Naive thymus-derived CD4-positive, alpha-beta T cell (primary cell): ENCODE measurements at regions of chr4 and their contacts with region 1.

Region 1: GRCh38 chr4:152779513-152780266 is at the starts of genes ARFIP1 and TIGD4:
- DNase-seq: peak; percentile 86 to 97 (median 93)
- ATAC-seq: peak; percentile 94
- H3K4me3 ChIP-seq: peak within 1 kb of the TSS; percentile 97
- H3K4me3 Mint-ChIP-seq: peak within 1 kb of the TSS; percentile 92 to 100 (median 96)
- H3K27ac ChIP-seq: peak within 1 kb of the TSS; percentile 80
- H3K27ac Mint-ChIP-seq: peak within 1 kb of the TSS; percentile 90 to 99 (median 95)
- H3K4me1 ChIP-seq: peaks cover 13 to 16% of the 10 kb centered on the region in 2 donors
- H3K4me1 Mint-ChIP-seq: peaks cover 33 to 60% (median 44%) of the 10 kb centered on the region in 7 donors
- H3K27me3 ChIP-seq: no peaks in the 10 kb centered on the region
- H3K27me3 Mint-ChIP-seq: peaks cover 0 to 29% (median 6%) of the 10 kb centered on the region in 5 donors
- total RNA-seq, gene ARFIP1: 5.1 to 20.2 (median 15.1) TPM
- total RNA-seq, gene TIGD4: 0.15 to 0.19 TPM in 2 of 5 experiments, not detected in the others

Region 2: DNA sequence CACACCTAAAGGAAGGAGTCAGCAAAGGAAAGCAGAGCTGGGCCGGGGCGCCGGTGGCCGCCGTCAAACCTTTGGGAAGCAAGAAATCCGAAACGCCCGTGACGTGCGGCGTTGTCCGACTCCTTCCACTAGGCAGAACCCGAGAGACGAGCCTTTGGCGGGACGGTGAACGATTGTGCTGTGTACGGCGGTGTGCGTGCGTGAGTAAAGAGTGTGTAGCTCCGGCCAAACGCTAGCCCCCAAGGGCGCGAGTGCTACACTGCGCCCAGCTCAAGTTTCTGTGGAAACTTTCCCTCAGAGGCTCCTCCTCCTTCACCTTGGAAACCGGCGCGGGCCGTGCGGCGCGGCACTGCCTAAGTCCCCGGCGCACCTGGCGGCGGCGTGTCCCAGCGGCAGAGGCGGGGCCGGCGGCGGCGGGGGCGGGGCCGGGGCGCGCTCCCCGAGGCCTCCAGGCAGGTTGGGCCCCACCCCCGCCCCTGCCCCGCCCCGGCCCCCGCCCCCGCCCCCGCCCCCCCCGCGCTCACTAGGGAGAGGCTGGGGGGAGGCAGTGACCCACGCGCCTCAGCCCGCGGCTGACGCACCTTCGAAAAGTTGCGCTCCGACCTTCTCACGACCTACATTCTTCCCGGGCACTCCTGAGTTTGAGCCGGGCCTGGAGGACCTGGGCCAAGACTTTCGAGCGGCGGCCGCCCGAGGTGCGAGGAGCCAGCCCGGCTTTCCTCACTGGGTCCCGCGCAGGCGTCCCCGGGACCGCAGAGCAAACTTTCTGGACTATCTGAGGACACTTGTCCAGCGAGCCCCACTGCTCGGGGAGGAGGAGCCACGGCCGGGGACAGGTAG is 1370.8 kb before region 1 on chr4 and contains the start of gene FHIP1A:
- CTCF ChIA-PET with region 1: no interaction called
- POLR2A ChIA-PET with region 1: no interaction called
- intact Hi-C with region 1: loop called in 1 of 2 experiments (anchors 1 kb)
- DNase-seq: peak; percentile 67 to 89 (median 87)
- ATAC-seq: peak; percentile 96
- H3K4me3 ChIP-seq: peak within 1 kb of the TSS; percentile 63
- H3K4me3 Mint-ChIP-seq: peak within 1 kb of the TSS; percentile 86 to 97 (median 94)
- H3K27ac ChIP-seq: peak within 1 kb of the TSS; percentile 53
- H3K27ac Mint-ChIP-seq: peak within 1 kb of the TSS; percentile 21 to 92 (median 85)
- H3K4me1 ChIP-seq: peaks cover 0 to 6% of the 10 kb centered on the region in 2 donors
- H3K4me1 Mint-ChIP-seq: peaks cover 15 to 26% (median 23%) of the 10 kb centered on the region in 7 donors
- H3K27me3 ChIP-seq: no peaks in the 10 kb centered on the region
- H3K27me3 Mint-ChIP-seq: peaks cover 0 to 56% (median 8%) of the 10 kb centered on the region in 5 donors
- total RNA-seq, gene FHIP1A: 0.05 to 2.7 (median 1.9) TPM

Region 3: GRCh38 chr4:152485726-152486276 is 293.9 kb before region 1 on chr4:
- CTCF ChIA-PET with region 1: no interaction called
- POLR2A ChIA-PET with region 1: no interaction called
- intact Hi-C with region 1: loop called in 1 of 2 experiments (anchors 2 kb)
- DNase-seq: peak in 7 of 9 donors; percentile 10 to 49 (median 35)
- ATAC-seq: peak; percentile 97
- H3K4me3 ChIP-seq: no peak overlapping the region
- H3K4me3 Mint-ChIP-seq: peak overlapping the region in 2 of 10 donors; percentile 10 to 74
- H3K27ac ChIP-seq: no peak overlapping the region
- H3K27ac Mint-ChIP-seq: peak overlapping the region in 3 of 9 donors; percentile 30 to 79 (median 40)
- H3K4me1 ChIP-seq: peaks cover 0 to 13% of the 10 kb centered on the region in 2 donors
- H3K4me1 Mint-ChIP-seq: peaks cover 30 to 56% (median 45%) of the 10 kb centered on the region in 7 donors
- H3K27me3 ChIP-seq: no peaks in the 10 kb centered on the region
- H3K27me3 Mint-ChIP-seq: no peaks in the 10 kb centered on the region

Region 4: DNA sequence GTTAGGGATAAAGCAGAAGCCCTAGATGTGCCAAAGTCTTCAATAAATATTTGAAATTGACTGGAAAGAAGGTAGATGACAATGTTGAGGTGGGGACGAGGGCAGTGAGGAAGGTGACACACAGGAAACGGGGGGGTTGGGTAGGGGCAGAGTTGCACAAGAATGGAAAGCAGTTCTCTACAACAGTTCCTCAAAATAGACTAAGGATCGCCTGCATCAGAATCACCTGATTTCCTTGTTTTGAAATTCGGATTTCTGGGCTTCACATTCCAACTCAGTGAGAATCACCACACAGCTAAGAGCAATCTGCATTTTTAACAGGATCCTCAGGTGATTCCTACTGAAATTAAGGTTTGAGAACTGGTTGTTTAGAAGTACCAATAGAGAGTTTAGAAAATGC is 70.7 kb after region 1 on chr4:
- CTCF ChIA-PET with region 1: no interaction called
- POLR2A ChIA-PET with region 1: no interaction called
- intact Hi-C with region 1: loop called in 1 of 2 experiments (anchors 1 kb)
- DNase-seq: peak in 4 of 9 donors; percentile 2 to 20 (median 11)
- ATAC-seq: peak; percentile 78
- H3K4me3 ChIP-seq: no peak overlapping the region
- H3K4me3 Mint-ChIP-seq: peak overlapping the region in 5 of 10 donors; percentile 9 to 40 (median 34)
- H3K27ac ChIP-seq: no peak overlapping the region
- H3K27ac Mint-ChIP-seq: peak overlapping the region in 4 of 9 donors; percentile 9 to 55 (median 36)
- H3K4me1 ChIP-seq: peaks cover 0 to 11% of the 10 kb centered on the region in 2 donors
- H3K4me1 Mint-ChIP-seq: peaks cover 13 to 26% (median 21%) of the 10 kb centered on the region in 7 donors
- H3K27me3 ChIP-seq: no peaks in the 10 kb centered on the region
- H3K27me3 Mint-ChIP-seq: no peaks in the 10 kb centered on the region

Region 5: DNA sequence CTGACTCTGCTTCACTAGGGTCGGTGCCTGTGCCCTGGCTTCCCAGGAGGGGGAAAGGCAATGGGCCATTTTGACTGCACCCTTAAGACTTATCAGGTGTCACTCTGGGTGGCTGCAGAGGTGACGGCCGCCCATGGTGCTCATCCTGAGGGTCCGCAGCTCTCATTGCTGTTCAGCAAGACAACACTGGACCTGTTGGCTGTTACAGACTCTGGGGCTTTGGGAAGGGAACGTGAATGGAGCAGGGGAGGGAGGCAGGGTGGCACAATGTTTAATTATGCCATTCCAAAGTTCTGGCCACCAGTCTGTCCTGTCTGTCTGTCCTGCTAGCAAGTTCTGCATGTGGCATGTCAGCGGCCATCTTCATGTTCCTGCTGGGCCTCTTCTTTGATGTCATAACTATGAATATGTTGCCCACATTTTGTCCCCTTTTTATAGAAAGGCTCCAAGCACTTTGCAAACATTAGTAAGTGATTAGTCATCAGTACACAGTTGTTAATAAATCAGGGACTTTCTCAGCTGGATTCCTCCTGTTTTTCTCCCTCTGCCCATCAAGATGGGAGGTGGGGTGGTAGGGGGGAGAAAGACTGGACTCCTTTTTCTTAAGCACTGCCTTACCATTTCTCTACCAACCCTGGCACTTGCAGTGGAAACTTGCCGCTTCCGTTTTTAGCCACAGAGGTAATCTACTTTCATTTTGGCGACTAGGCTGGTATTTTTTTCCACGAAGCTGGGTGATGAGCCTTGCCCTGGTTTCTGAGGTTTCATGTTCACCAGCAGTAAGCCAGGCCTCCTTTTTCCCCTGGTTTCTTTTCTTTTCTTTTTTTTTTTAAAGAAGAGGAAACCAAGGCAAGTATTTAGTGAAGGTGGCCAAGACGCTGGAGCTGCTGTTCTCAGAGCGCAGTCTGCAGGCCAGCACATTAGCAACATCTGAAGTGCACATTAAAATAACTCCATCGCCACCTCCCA is 335.9 kb after region 1 on chr4:
- CTCF ChIA-PET with region 1: no interaction called
- POLR2A ChIA-PET with region 1: interaction called, 4 read pairs
- intact Hi-C with region 1: loop called (anchors 1 kb)
- DNase-seq: peak in 8 of 9 donors; percentile 64 to 93 (median 89)
- ATAC-seq: peak; percentile 65
- H3K4me3 ChIP-seq: peak overlapping the region; percentile 46
- H3K4me3 Mint-ChIP-seq: peak overlapping the region in 2 of 10 donors; percentile 70 to 79
- H3K27ac ChIP-seq: peak overlapping the region; percentile 84
- H3K27ac Mint-ChIP-seq: no peak overlapping the region
- H3K4me1 ChIP-seq: peaks cover 43 to 62% of the 10 kb centered on the region in 2 donors
- H3K4me1 Mint-ChIP-seq: peaks cover 0 to 26% (median 11%) of the 10 kb centered on the region in 7 donors
- H3K27me3 ChIP-seq: no peaks in the 10 kb centered on the region
- H3K27me3 Mint-ChIP-seq: peaks cover 0 to 9% (median 0%) of the 10 kb centered on the region in 5 donors

Region 6: DNA sequence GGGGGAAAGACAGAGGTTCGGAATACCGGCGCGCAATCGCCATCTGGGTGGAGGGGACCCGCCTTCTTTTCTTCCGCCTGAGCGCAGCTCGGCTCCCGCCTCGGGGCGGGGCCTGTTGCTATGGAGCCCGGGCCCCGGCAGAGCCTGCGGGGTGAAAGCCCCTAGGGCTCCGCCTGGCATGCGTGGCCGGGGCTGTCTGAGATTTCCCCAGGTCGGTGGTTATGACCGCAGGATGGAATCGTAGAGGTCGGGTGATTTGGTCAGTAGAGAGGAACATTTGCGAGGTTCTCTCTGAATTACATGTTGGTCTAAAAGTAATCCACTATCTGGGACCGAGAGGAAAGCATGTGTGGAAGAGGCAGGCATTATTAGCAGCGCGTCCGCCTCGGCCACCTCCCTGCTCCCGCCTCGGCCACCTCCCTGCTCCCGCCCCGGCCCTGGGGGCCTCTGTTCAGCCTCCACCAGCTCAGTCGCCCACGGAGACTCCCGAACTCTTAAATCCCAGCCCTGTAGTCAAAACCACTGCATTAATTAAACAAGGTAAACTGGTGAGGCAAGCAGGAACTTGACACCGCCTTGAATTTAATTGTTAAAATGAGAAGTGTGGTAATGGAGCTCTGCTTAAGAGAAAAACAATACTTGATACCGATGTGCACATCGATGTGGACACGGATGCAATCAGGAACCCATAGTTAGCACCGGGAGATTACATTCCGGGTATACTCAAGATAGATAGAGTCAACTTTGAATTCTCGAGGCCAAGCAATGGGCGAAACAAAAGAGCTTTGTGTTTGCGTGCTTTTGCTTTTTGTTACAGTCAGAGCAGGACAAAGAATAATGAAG is 469.7 kb after region 1 on chr4:
- CTCF ChIA-PET with region 1: no interaction called
- POLR2A ChIA-PET with region 1: no interaction called
- intact Hi-C with region 1: loop called (anchors 2 to 10 kb)
- DNase-seq: peak; percentile 81 to 91 (median 86)
- ATAC-seq: peak; percentile 98
- H3K4me3 ChIP-seq: peak overlapping the region; percentile 62
- H3K4me3 Mint-ChIP-seq: peak overlapping the region; percentile 85 to 96 (median 92)
- H3K27ac ChIP-seq: peak overlapping the region; percentile 80
- H3K27ac Mint-ChIP-seq: peak overlapping the region; percentile 81 to 98 (median 96)
- H3K4me1 ChIP-seq: peaks cover 3 to 10% of the 10 kb centered on the region in 2 donors
- H3K4me1 Mint-ChIP-seq: peaks cover 7 to 44% (median 26%) of the 10 kb centered on the region in 7 donors
- H3K27me3 ChIP-seq: no peaks in the 10 kb centered on the region
- H3K27me3 Mint-ChIP-seq: peaks cover 0 to 11% (median 0%) of the 10 kb centered on the region in 5 donors